Caco-2 (cell line): ENCODE measurements at regions of chr7 and their contacts with region 1.

Region 1: DNA sequence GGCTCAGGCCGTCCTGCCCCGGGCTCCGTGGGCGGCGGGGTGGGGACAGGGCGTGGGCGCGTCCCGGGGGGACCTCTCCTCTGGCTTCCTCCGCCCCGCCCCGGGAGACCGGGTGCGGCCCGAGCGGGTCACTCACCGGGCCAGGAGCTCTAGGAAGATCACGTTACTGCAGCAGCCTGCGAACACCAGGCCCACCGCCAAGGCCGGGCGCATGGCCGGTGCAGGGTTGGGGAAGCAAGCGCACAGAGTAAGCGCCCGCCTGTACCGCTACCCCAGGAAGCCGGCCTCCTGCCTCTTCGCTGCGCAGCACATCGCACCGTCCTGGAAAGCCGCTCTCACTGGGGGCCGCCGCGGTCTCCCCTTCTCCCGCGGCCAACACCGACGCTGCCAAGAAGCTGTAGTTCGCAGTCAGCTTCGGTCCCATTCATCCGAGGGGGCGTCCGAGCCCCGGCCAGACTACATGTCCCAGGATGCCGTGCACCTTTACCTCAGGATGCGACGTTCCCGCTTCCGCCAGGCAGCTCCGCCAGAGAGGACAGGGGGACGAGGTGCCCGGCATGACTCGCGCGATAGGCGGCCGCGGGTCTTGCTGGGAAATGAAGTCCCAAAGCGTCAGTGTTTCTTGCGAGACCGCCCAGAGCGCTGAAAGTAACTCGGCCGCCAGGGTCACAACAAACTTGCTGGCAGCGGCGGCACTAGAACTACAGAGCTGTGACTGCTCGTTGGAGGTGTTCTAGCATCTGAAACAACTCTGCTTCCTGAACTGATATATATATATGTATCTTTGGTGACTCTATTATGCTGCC is at the start of gene SLC35B4:
- DNase-seq: peak; percentile 97 to 98
- H3K4me3 ChIP-seq: peak within 1 kb of the TSS; percentile 78
- H3K4me3 Mint-ChIP-seq: peak within 1 kb of the TSS; percentile 80
- H3K27ac Mint-ChIP-seq: peak within 1 kb of the TSS; percentile 36
- H3K4me1 ChIP-seq: no peaks in the 10 kb centered on the region
- H3K4me1 Mint-ChIP-seq: peaks cover 7% of the 10 kb centered on the region
- H3K27me3 ChIP-seq: no peaks in the 10 kb centered on the region
- H3K27me3 Mint-ChIP-seq: peaks cover 9% of the 10 kb centered on the region
- CTCF ChIP-seq: peak; percentile 34 to 42
- total RNA-seq, gene SLC35B4: 17.1 and 18.2 TPM in 2 replicates

Region 2: GRCh38 chr7:134293002-134293740 is 23.6 kb before region 1 on chr7:
- CTCF ChIA-PET with region 1: no interaction called
- POLR2A ChIA-PET with region 1: no interaction called
- intact Hi-C with region 1: loop called (anchors 2 kb)
- DNase-seq: peak in 1 of 2 experiments; percentile 24
- H3K4me3 ChIP-seq: no peak overlapping the region
- H3K4me3 Mint-ChIP-seq: no peak overlapping the region
- H3K27ac Mint-ChIP-seq: no peak overlapping the region
- H3K4me1 ChIP-seq: no peaks in the 10 kb centered on the region
- H3K4me1 Mint-ChIP-seq: peaks cover 8% of the 10 kb centered on the region
- H3K27me3 ChIP-seq: no peaks in the 10 kb centered on the region
- H3K27me3 Mint-ChIP-seq: no peaks in the 10 kb centered on the region
- CTCF ChIP-seq: no peak